Activated B cell treated with CpG ODN at 0.5 μM for 24 hours (primary cell): ENCODE measurements at regions of chrX and their contacts with region 1.

Region 1: DNA sequence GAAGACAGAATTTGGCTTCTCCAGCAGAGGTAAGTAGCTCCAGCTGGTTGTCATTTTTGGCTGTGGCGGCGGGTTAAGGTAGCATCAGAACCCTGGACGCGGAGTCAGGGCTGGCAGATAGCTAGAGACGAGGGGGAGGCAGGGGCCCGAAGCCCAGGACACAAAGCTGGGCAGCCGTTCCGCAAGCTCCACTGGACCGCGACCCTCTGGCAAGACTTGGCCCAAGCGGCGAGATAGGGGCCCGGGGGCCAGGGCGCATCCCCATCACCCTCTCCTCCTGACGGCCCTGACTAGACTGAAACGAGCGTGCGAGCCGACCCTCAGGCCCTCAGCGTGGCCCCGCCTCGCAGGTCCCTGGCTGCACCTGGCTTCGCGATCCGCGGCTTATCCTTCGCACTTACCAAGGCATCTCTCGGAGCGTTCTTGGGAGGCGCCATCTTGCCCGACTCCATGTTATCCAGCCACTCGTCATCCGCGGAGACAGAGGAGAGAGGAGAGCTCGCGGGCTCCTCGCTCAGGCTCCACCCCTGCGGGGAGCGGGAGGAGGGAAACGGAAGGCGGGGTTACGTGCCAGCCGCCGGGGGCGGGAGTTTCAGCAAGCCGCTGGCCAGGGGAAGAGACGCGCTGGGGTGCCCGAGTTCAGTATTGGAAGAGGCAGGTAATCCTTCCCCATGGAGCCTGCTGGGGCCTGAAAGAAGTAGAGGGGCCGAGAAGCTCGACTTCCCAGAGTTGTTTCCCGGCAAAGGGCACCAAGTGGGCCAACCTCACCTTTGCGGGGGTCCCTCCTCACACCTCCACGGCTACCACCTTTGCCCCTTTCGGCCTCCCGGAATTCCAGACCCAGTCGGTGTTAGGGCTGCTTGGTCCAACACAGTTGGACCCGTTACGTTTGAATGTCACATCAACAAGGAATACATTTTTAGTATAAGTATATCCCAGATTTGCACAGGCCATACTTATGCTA is at the start of gene TAF9B:
- DNase-seq: peak; percentile 66
- ATAC-seq: peak; percentile 93
- H3K4me3 Mint-ChIP-seq: peak within 1 kb of the TSS; percentile 92
- H3K27ac Mint-ChIP-seq: peak within 1 kb of the TSS; percentile 77
- H3K4me1 Mint-ChIP-seq: no peaks in the 10 kb centered on the region
- H3K27me3 Mint-ChIP-seq: no peaks in the 10 kb centered on the region
- CTCF ChIP-seq: no peak
- total RNA-seq, gene TAF9B: 16.2 and 17.4 TPM in 2 replicates

Region 2: GRCh38 chrX:77679145-77679544 is 460.3 kb before region 1 on chrX:
- CTCF ChIA-PET with region 1: no interaction called
- POLR2A ChIA-PET with region 1: no interaction called
- intact Hi-C with region 1: no loop called
- DNase-seq: no peak
- ATAC-seq: no peak
- H3K4me3 Mint-ChIP-seq: no peak overlapping the region
- H3K27ac Mint-ChIP-seq: no peak overlapping the region
- H3K4me1 Mint-ChIP-seq: no peaks in the 10 kb centered on the region
- H3K27me3 Mint-ChIP-seq: no peaks in the 10 kb centered on the region
- CTCF ChIP-seq: no peak

Region 3: GRCh38 chrX:78042601-78043000 is 96.8 kb before region 1 on chrX:
- CTCF ChIA-PET with region 1: no interaction called
- POLR2A ChIA-PET with region 1: no interaction called
- intact Hi-C with region 1: no loop called
- DNase-seq: no peak
- ATAC-seq: no peak
- H3K4me3 Mint-ChIP-seq: no peak overlapping the region
- H3K27ac Mint-ChIP-seq: no peak overlapping the region
- H3K4me1 Mint-ChIP-seq: no peaks in the 10 kb centered on the region
- H3K27me3 Mint-ChIP-seq: no peaks in the 10 kb centered on the region
- CTCF ChIP-seq: no peak

Region 4: GRCh38 chrX:78103623-78104446 is 35.6 kb before region 1 on chrX and contains the start of gene PGK1:
- CTCF ChIA-PET with region 1: no interaction called
- POLR2A ChIA-PET with region 1: interaction called, 4 read pairs
- intact Hi-C with region 1: loop called (anchors 1 kb)
- DNase-seq: peak; percentile 81
- ATAC-seq: peak; percentile 95
- H3K4me3 Mint-ChIP-seq: peak within 1 kb of the TSS; percentile 87
- H3K27ac Mint-ChIP-seq: peak within 1 kb of the TSS; percentile 90
- H3K4me1 Mint-ChIP-seq: peaks cover 41% of the 10 kb centered on the region
- H3K27me3 Mint-ChIP-seq: peaks cover 2% of the 10 kb centered on the region
- CTCF ChIP-seq: no peak
- total RNA-seq, gene PGK1: 293 and 295 TPM in 2 replicates

Region 5: GRCh38 chrX:78119521-78120227 is 19.8 kb before region 1 on chrX:
- CTCF ChIA-PET with region 1: no interaction called
- POLR2A ChIA-PET with region 1: no interaction called
- intact Hi-C with region 1: no loop called
- DNase-seq: no peak
- ATAC-seq: no peak
- H3K4me3 Mint-ChIP-seq: no peak overlapping the region
- H3K27ac Mint-ChIP-seq: peak overlapping the region; percentile 32
- H3K4me1 Mint-ChIP-seq: peaks cover 19% of the 10 kb centered on the region
- H3K27me3 Mint-ChIP-seq: no peaks in the 10 kb centered on the region
- CTCF ChIP-seq: no peak

Region 6: GRCh38 chrX:78283511-78283910 is 144.1 kb after region 1 on chrX:
- CTCF ChIA-PET with region 1: no interaction called
- POLR2A ChIA-PET with region 1: no interaction called
- intact Hi-C with region 1: no loop called
- DNase-seq: no peak
- ATAC-seq: no peak
- H3K4me3 Mint-ChIP-seq: no peak overlapping the region
- H3K27ac Mint-ChIP-seq: no peak overlapping the region
- H3K4me1 Mint-ChIP-seq: peaks cover 6% of the 10 kb centered on the region
- H3K27me3 Mint-ChIP-seq: no peaks in the 10 kb centered on the region
- CTCF ChIP-seq: no peak

Region 7: GRCh38 chrX:78321809-78322208 is 182.4 kb after region 1 on chrX:
- CTCF ChIA-PET with region 1: no interaction called
- POLR2A ChIA-PET with region 1: no interaction called
- intact Hi-C with region 1: loop called (anchors 10 kb)
- DNase-seq: peak; percentile 24
- ATAC-seq: peak; percentile 93
- H3K4me3 Mint-ChIP-seq: peak overlapping the region; percentile 41
- H3K27ac Mint-ChIP-seq: peak overlapping the region; percentile 77
- H3K4me1 Mint-ChIP-seq: peaks cover 61% of the 10 kb centered on the region
- H3K27me3 Mint-ChIP-seq: no peaks in the 10 kb centered on the region
- CTCF ChIP-seq: no peak

Region 8: GRCh38 chrX:79412972-79413371 is 1273.5 kb after region 1 on chrX:
- CTCF ChIA-PET with region 1: no interaction called
- POLR2A ChIA-PET with region 1: no interaction called
- intact Hi-C with region 1: loop called (anchors 10 kb)
- DNase-seq: no peak
- ATAC-seq: no peak
- H3K4me3 Mint-ChIP-seq: peak overlapping the region; percentile 11
- H3K27ac Mint-ChIP-seq: no peak overlapping the region
- H3K4me1 Mint-ChIP-seq: peaks cover under 1% of the 10 kb centered on the region
- H3K27me3 Mint-ChIP-seq: no peaks in the 10 kb centered on the region
- CTCF ChIP-seq: no peak